SK-N-SH (cell line): ENCODE measurements at regions of chr11 and their contacts with region 1.

Region 1: GRCh38 chr11:14300661-14301304 is 58.2 kb downstream of the RRAS2 start:
- DNase-seq: peak; percentile 61
- H3K4me3 ChIP-seq: peak overlapping the region in 1 of 2 experiments; percentile 6; a peak in 2 of 4 replicates
- H3K27ac ChIP-seq: no peak overlapping the region
- H3K4me1 ChIP-seq: peaks cover 2 to 17% of the 10 kb centered on the region in 2 experiments; a peak in 1 of 4 replicates
- H3K27me3 ChIP-seq: no peaks in the 10 kb centered on the region
- CTCF ChIP-seq: peak; percentile 84
- EP300 ChIP-seq: no peak
- RAD21 ChIP-seq: peak; percentile 97

Region 2: DNA sequence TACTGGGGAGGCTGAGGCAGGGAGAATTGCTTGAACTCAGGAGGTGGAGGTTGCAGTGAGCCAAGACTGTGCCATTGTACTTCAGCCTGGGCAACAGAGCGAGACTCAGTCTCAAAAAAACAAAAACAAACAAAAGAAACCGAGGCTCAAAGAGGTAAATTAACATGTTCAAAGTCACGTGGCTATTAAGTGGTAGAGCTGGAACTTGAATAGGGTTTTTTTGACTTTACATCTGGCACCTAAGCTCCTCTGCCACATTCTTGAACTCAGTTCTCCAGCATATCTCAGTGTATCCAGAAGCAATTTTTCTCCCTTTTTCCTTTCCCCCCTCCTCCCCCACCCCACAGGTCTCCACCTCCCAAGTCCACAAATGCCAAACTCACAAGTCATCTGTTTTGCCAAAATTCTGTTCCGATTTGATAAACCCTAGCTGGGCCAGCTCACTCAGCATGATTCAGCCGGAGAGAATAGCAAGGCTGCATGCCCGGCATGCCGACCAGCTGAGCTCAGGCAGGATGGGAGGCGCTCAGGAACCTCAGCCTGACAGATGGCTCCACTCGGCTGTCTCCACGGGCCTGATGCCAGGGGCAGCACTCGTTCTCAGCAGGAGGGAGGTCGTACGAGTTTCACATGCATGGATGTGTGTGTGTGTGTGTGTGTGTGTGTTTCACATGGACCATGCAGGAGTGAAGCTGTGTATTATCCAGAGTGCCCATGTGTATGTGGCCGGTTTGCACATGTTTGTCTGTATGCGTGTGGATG is 121.5 kb after region 1 on chr11:
- CTCF ChIA-PET with region 1: interaction called, 62 read pairs
- POLR2A ChIA-PET with region 1: no interaction called
- DNase-seq: peak; percentile 69
- H3K4me3 ChIP-seq: no peak overlapping the region
- H3K27ac ChIP-seq: peak overlapping the region in 1 of 2 experiments; percentile 82; a peak in 3 of 4 replicates
- H3K4me1 ChIP-seq: peaks cover 9 to 36% of the 10 kb centered on the region in 2 experiments; a peak in 3 of 4 replicates
- H3K27me3 ChIP-seq: no peaks in the 10 kb centered on the region
- CTCF ChIP-seq: no peak
- EP300 ChIP-seq: peak; percentile 27 to 99; a peak in 3 of 4 replicates
- RAD21 ChIP-seq: no peak

Region 3: DNA sequence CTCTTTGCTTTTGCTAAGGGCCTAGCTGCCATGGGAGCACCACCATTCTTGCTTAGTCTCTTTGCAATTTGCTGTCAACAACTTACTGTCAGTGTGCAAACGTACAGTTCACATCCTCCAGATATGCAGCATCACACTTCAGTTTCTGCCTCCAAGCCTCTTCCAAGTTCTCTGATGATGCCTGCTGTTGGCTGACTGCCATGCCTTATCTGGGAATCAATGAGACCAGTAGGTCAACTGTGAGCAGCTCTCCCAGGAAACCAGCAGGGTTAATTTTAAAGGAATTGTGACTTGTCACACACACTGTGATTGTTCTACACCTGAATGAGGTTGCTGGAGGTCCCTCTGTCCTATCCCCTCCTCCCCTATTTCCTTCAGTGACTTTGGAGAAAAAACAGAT is 142.9 kb after region 1 on chr11:
- CTCF ChIA-PET with region 1: interaction called, 22 read pairs
- POLR2A ChIA-PET with region 1: no interaction called
- DNase-seq: peak; percentile 43
- H3K4me3 ChIP-seq: no peak overlapping the region
- H3K27ac ChIP-seq: peak overlapping the region in 1 of 2 experiments; percentile 89; a peak in 2 of 4 replicates
- H3K4me1 ChIP-seq: peaks cover 7 to 29% of the 10 kb centered on the region in 2 experiments; a peak in 3 of 4 replicates
- H3K27me3 ChIP-seq: no peaks in the 10 kb centered on the region
- CTCF ChIP-seq: no peak
- EP300 ChIP-seq: peak in 1 of 2 experiments; percentile 64; a peak in 1 of 4 replicates
- RAD21 ChIP-seq: no peak

Region 4: GRCh38 chr11:14454861-14455632 is 154.3 kb after region 1 on chr11:
- CTCF ChIA-PET with region 1: interaction called, 89 read pairs
- POLR2A ChIA-PET with region 1: interaction called, 9 read pairs
- DNase-seq: peak; percentile 39
- H3K4me3 ChIP-seq: no peak overlapping the region
- H3K27ac ChIP-seq: peak overlapping the region in 1 of 2 experiments; percentile 61; a peak in 2 of 4 replicates
- H3K4me1 ChIP-seq: no peaks in the 10 kb centered on the region
- H3K27me3 ChIP-seq: no peaks in the 10 kb centered on the region
- CTCF ChIP-seq: peak; percentile 86
- EP300 ChIP-seq: no peak
- RAD21 ChIP-seq: peak; percentile 68

Region 5: GRCh38 chr11:14480716-14481115 is 179.9 kb after region 1 on chr11:
- CTCF ChIA-PET with region 1: interaction called, 14 read pairs
- POLR2A ChIA-PET with region 1: no interaction called
- DNase-seq: no peak
- H3K4me3 ChIP-seq: no peak overlapping the region
- H3K27ac ChIP-seq: no peak overlapping the region
- H3K4me1 ChIP-seq: no peaks in the 10 kb centered on the region
- H3K27me3 ChIP-seq: no peaks in the 10 kb centered on the region
- CTCF ChIP-seq: no peak
- EP300 ChIP-seq: no peak
- RAD21 ChIP-seq: no peak